ENCODE measurements at regions of chr6 and their contacts with region 1.

Region 1: GRCh38 chr6:36423101-36423824 is 19.4 kb downstream of the PXT1 start:
- DNase-seq: peak; percentile 91
- ATAC-seq: peak; percentile 95
- H3K4me3 Mint-ChIP-seq: peak overlapping the region; percentile 94
- H3K27ac Mint-ChIP-seq: peak overlapping the region; percentile 89
- H3K4me1 Mint-ChIP-seq: peaks cover 16% of the 10 kb centered on the region
- H3K27me3 Mint-ChIP-seq: no peaks in the 10 kb centered on the region
- CTCF ChIP-seq: no peak

Region 2: GRCh38 chr6:36302227-36302976 is 120.9 kb before region 1 on chr6:
- CTCF ChIA-PET with region 1: no interaction called
- POLR2A ChIA-PET with region 1: no interaction called
- intact Hi-C with region 1: no loop called
- DNase-seq: peak; percentile 65
- ATAC-seq: peak; percentile 99
- H3K4me3 Mint-ChIP-seq: no peak overlapping the region
- H3K27ac Mint-ChIP-seq: no peak overlapping the region
- H3K4me1 Mint-ChIP-seq: peaks cover 1% of the 10 kb centered on the region
- H3K27me3 Mint-ChIP-seq: peaks cover 21% of the 10 kb centered on the region
- CTCF ChIP-seq: peak; percentile 82

Region 3: GRCh38 chr6:36442671-36443470 is 19.6 kb after region 1 on chr6 and contains the starts of genes KCTD20 and PXT1:
- CTCF ChIA-PET with region 1: interaction called, 5 read pairs
- POLR2A ChIA-PET with region 1: interaction called, 25 read pairs
- intact Hi-C with region 1: loop called (anchors 1 kb)
- DNase-seq: peak; percentile 85
- ATAC-seq: peak; percentile 84
- H3K4me3 Mint-ChIP-seq: peak within 1 kb of the TSS; percentile 98
- H3K27ac Mint-ChIP-seq: peak within 1 kb of the TSS; percentile 96
- H3K4me1 Mint-ChIP-seq: peaks cover 46% of the 10 kb centered on the region
- H3K27me3 Mint-ChIP-seq: no peaks in the 10 kb centered on the region
- CTCF ChIP-seq: no peak
- total RNA-seq, gene KCTD20: 45.5 and 48.1 TPM in 2 replicates
- total RNA-seq, gene PXT1: 0.11 and 0.22 TPM in 2 replicates